ENCODE measurements at regions of chr6 and their contacts with region 1.

Region 1: GRCh38 chr6:155103816-155104366 is 108.8 kb downstream of the TIAM2 start:
- DNase-seq: peak; percentile 61
- H3K4me3 Mint-ChIP-seq: peak overlapping the region; percentile 28
- H3K27ac Mint-ChIP-seq: peak overlapping the region; percentile 65
- H3K4me1 Mint-ChIP-seq: peaks cover 44% of the 10 kb centered on the region
- H3K27me3 Mint-ChIP-seq: peaks cover 2% of the 10 kb centered on the region

Region 2: DNA sequence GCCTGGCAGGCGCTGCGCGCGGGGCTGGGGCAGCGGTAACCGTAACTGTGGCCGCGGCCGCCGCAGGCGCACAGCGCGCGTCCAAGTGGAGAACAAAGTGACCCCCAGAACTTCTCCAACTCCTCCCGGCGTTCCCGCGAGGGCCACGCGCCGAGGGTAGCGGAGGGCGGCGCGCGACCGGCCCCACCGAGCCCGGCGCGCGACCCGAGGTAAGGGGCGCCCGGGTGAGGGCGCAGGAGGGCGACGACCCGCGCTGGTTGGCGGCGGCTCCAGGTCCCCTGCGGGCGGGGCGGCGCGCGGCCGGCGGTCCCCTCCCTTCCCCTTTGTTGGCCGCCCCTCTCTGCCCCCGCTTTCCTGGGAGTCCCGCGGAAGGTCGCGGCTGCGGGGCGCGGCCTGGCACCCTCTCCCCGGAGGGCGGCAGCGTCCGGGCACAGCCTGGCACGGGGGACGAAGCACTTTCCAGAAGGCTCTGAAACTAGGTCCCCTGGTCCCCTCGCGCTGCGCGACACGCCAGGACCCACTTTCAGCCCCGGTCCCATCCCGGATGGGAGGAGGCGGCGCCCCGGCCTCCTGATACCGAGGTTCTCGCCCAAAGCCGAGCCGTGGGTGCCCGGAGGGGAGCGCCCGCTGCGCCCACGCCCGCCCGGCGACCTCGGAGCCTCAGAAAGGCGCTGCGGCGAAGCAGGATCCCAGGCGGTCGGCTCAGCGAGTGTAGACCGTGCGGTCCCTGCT is 108.4 kb before region 1 on chr6 and contains the start of gene TIAM2:
- intact Hi-C with region 1: loop called (anchors 5 kb)
- DNase-seq: peak; percentile 76
- H3K4me3 Mint-ChIP-seq: peak within 1 kb of the TSS; percentile 68
- H3K27ac Mint-ChIP-seq: peak within 1 kb of the TSS; percentile 64
- H3K4me1 Mint-ChIP-seq: peaks cover 15% of the 10 kb centered on the region
- H3K27me3 Mint-ChIP-seq: peaks cover 24% of the 10 kb centered on the region
- total RNA-seq, gene TIAM2: 86.9 and 91.9 TPM in 2 replicates

Region 3: DNA sequence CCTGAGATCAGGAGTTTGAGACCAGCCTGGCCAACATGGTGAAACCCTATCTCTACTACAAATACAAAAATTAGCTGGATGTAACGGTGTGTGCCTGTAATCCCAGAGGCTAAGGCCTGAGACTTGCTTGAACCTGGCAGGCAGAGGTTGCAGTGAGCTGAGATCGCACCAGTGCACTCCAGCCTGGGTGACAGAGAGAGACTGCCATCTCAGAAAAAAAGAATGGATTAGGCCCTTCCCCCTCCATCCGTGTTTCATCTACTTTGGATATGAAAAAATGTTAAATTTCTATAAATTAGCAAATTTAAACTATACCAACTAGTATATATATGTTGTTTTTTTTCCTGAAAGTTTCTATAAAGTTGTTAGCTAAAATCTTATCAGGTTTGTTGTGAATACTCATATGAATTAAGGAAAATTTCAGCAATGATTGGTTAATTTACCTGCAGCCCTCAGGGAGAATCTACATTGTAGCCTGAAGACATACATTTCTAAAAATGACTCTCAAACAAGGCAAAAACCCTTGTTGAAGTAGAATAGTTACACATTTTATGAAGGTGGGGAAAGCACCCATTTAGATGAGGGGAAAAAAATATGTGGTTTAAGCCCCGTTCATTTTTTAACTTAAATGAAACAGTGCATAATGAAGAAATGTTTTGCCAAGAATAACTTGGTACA is 12.1 kb after region 1 on chr6:
- intact Hi-C with region 1: loop called (anchors 1 kb)
- DNase-seq: no peak
- H3K4me3 Mint-ChIP-seq: peak overlapping the region; percentile 47
- H3K27ac Mint-ChIP-seq: peak overlapping the region; percentile 86
- H3K4me1 Mint-ChIP-seq: peaks cover 31% of the 10 kb centered on the region
- H3K27me3 Mint-ChIP-seq: no peaks in the 10 kb centered on the region

Region 4: DNA sequence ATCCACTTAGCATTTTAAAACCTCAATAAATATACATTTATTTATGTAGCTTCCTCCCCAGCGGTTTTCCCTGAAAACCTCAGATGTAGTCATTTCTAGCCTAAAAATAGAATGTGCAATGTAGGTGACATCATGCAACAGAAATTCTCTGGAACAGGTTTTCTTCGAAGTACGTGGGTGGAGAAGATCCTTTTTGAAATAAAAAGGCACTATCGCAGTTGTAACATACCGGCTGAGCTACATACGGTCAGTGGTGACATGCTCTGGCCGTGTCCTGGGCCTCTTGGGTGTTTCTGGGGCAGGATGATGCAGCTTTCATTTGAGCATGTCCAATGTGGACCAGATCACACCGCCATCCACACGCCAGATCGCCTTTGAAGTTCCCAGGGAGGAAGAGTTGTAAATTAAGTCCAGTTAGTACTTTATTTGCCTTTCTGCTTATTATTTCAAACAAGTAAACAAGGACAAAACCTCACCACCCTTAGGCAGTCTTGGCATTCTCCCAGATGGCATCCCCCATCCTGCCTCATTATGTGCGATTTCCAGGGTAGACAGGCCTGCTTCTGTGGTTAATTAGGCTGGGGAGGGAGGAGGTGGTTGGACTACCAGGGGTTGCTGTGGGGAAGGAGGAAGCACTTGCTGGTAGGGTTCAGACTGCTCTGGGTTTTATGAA is 50.4 kb after region 1 on chr6:
- intact Hi-C with region 1: loop called (anchors 2 kb)
- DNase-seq: peak; percentile 86
- H3K4me3 Mint-ChIP-seq: peak overlapping the region; percentile 53
- H3K27ac Mint-ChIP-seq: peak overlapping the region; percentile 88
- H3K4me1 Mint-ChIP-seq: peaks cover 73% of the 10 kb centered on the region
- H3K27me3 Mint-ChIP-seq: no peaks in the 10 kb centered on the region